PC-3 (cell line): ENCODE measurements at regions of chr3 and their contacts with region 1.

Region 1: GRCh38 chr3:168865022-168865551 is 769.4 kb upstream of the GOLIM4 start:
- DNase-seq: peak; percentile 80
- ATAC-seq: no peak
- H3K4me3 ChIP-seq: no peak overlapping the region
- H3K27ac ChIP-seq: no peak overlapping the region
- H3K4me1 ChIP-seq: peaks cover 7% of the 10 kb centered on the region
- H3K27me3 ChIP-seq: no peaks in the 10 kb centered on the region
- CTCF ChIP-seq: peak; percentile 82

Region 2: DNA sequence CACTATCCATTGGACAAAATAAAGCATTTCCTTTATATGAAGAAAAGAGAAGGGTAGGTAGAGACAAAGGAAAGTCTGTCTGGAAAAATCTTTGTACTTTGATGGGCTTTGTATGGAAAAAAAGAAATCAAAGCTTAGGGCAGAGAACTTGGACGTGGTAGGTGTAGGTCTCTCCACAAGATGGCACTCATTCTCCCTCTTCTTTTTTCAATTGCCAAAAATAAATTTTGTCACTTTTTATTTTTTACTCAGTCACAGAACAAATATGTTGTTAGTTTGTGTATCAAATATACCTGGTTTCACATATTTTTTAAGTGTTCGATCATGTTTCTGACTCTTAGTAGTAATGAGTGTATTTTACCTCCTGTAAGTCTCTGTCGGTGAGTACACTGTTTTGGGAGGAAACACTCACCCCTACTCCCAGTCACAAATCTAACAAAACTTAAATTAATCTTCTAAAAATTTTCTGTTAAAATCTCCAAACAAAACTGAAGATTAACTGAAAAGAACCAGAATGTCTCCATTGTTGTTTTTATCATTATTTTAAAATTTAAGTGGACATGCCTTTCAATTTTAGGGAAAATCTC is 353.6 kb before region 1 on chr3:
- CTCF ChIA-PET with region 1: no interaction called
- POLR2A ChIA-PET with region 1: no interaction called
- intact Hi-C with region 1: no loop called
- DNase-seq: peak; percentile 50
- ATAC-seq: peak; percentile 48
- H3K4me3 ChIP-seq: no peak overlapping the region
- H3K27ac ChIP-seq: no peak overlapping the region
- H3K4me1 ChIP-seq: no peaks in the 10 kb centered on the region
- H3K27me3 ChIP-seq: no peaks in the 10 kb centered on the region
- CTCF ChIP-seq: peak; percentile 84

Region 3: GRCh38 chr3:168531116-168531515 is 334.0 kb before region 1 on chr3:
- CTCF ChIA-PET with region 1: no interaction called
- POLR2A ChIA-PET with region 1: no interaction called
- intact Hi-C with region 1: no loop called
- DNase-seq: no peak
- ATAC-seq: no peak
- H3K4me3 ChIP-seq: no peak overlapping the region
- H3K27ac ChIP-seq: no peak overlapping the region
- H3K4me1 ChIP-seq: no peaks in the 10 kb centered on the region
- H3K27me3 ChIP-seq: no peaks in the 10 kb centered on the region
- CTCF ChIP-seq: no peak

Region 4: GRCh38 chr3:168570404-168571155 is 294.5 kb before region 1 on chr3:
- CTCF ChIA-PET with region 1: no interaction called
- POLR2A ChIA-PET with region 1: no interaction called
- intact Hi-C with region 1: no loop called
- DNase-seq: no peak
- ATAC-seq: no peak
- H3K4me3 ChIP-seq: no peak overlapping the region
- H3K27ac ChIP-seq: no peak overlapping the region
- H3K4me1 ChIP-seq: no peaks in the 10 kb centered on the region
- H3K27me3 ChIP-seq: no peaks in the 10 kb centered on the region
- CTCF ChIP-seq: no peak

Region 5: GRCh38 chr3:168884353-168884903 is 19.3 kb after region 1 on chr3:
- CTCF ChIA-PET with region 1: interaction called, 13 read pairs
- POLR2A ChIA-PET with region 1: no interaction called
- intact Hi-C with region 1: loop called (anchors 1 kb)
- DNase-seq: peak; percentile 98
- ATAC-seq: peak; percentile 66
- H3K4me3 ChIP-seq: peak overlapping the region; percentile 51
- H3K27ac ChIP-seq: peak overlapping the region; percentile 97
- H3K4me1 ChIP-seq: peaks cover 54% of the 10 kb centered on the region
- H3K27me3 ChIP-seq: no peaks in the 10 kb centered on the region
- CTCF ChIP-seq: no peak

Region 6: GRCh38 chr3:168952551-168952950 is 87.5 kb after region 1 on chr3:
- CTCF ChIA-PET with region 1: interaction called, 11 read pairs
- POLR2A ChIA-PET with region 1: interaction called, 7 read pairs
- intact Hi-C with region 1: loop called (anchors 1 kb)
- DNase-seq: peak; percentile 73
- ATAC-seq: peak; percentile 47
- H3K4me3 ChIP-seq: no peak overlapping the region
- H3K27ac ChIP-seq: peak overlapping the region; percentile 89
- H3K4me1 ChIP-seq: peaks cover 34% of the 10 kb centered on the region
- H3K27me3 ChIP-seq: no peaks in the 10 kb centered on the region
- CTCF ChIP-seq: peak; percentile 73

Region 7: GRCh38 chr3:169103951-169104941 is 239.2 kb after region 1 on chr3:
- CTCF ChIA-PET with region 1: no interaction called
- POLR2A ChIA-PET with region 1: no interaction called
- intact Hi-C with region 1: loop called (anchors 10 kb)
- DNase-seq: peak; percentile 67
- ATAC-seq: peak; percentile 34
- H3K4me3 ChIP-seq: no peak overlapping the region
- H3K27ac ChIP-seq: no peak overlapping the region
- H3K4me1 ChIP-seq: peaks cover 35% of the 10 kb centered on the region
- H3K27me3 ChIP-seq: no peaks in the 10 kb centered on the region
- CTCF ChIP-seq: no peak

Region 8: GRCh38 chr3:169744366-169745054 is 879.4 kb after region 1 on chr3:
- CTCF ChIA-PET with region 1: interaction called, 6 read pairs
- POLR2A ChIA-PET with region 1: no interaction called
- intact Hi-C with region 1: loop called (anchors 5 kb)
- DNase-seq: peak; percentile 66
- ATAC-seq: 0 out of 2 replicates have a peak, but pooled peaks have one; percentile 39
- H3K4me3 ChIP-seq: no peak overlapping the region
- H3K27ac ChIP-seq: no peak overlapping the region
- H3K4me1 ChIP-seq: peaks cover 20% of the 10 kb centered on the region
- H3K27me3 ChIP-seq: no peaks in the 10 kb centered on the region
- CTCF ChIP-seq: peak; percentile 83